ENCODE measurements at regions of chr3 and their contacts with region 1.

Region 1: DNA sequence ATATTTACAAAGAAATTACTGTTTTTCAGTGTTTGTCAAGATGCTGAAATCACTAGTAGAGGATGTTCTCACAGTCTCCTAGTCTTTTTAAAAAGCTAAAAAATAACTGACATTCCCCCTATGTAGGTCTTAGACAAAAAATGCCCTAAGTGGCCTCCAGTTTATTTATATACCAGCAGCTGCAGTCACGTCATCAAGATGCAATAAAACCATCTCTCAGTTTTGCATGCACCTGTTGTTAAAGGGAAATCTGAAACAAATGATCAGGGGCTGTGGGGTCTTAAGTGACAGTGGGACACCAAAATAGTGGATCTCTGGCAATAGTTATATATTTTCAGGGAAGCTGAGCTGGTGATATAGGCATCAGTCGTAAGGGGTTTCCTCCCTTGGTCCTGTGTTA is 146.5 kb upstream of the ARPP21 start:
- DNase-seq: no peak
- ATAC-seq: no peak
- H3K4me3 ChIP-seq: no peak overlapping the region
- H3K27ac ChIP-seq: no peak overlapping the region
- H3K4me1 ChIP-seq: no peaks in the 10 kb centered on the region
- H3K27me3 ChIP-seq: no peaks in the 10 kb centered on the region
- CTCF ChIP-seq: no peak
- EP300 ChIP-seq: no peak
- POLR2A ChIP-seq: no peak
- RAD21 ChIP-seq: no peak

Region 2: GRCh38 chr3:35393901-35394799 is 98.7 kb before region 1 on chr3:
- CTCF ChIA-PET with region 1: no interaction called
- POLR2A ChIA-PET with region 1: no interaction called
- in situ Hi-C with region 1: no loop called
- intact Hi-C with region 1: loop called (anchors 5 kb)
- DNase-seq: no peak
- ATAC-seq: no peak
- H3K4me3 ChIP-seq: no peak overlapping the region
- H3K27ac ChIP-seq: no peak overlapping the region
- H3K4me1 ChIP-seq: no peaks in the 10 kb centered on the region
- H3K27me3 ChIP-seq: no peaks in the 10 kb centered on the region
- CTCF ChIP-seq: no peak
- EP300 ChIP-seq: no peak
- POLR2A ChIP-seq: no peak
- RAD21 ChIP-seq: no peak

Region 3: GRCh38 chr3:35473956-35474355 is 18.9 kb before region 1 on chr3:
- CTCF ChIA-PET with region 1: no interaction called
- POLR2A ChIA-PET with region 1: no interaction called
- in situ Hi-C with region 1: no loop called
- intact Hi-C with region 1: no loop called
- DNase-seq: no peak
- ATAC-seq: no peak
- H3K4me3 ChIP-seq: no peak overlapping the region
- H3K27ac ChIP-seq: no peak overlapping the region
- H3K4me1 ChIP-seq: no peaks in the 10 kb centered on the region
- H3K27me3 ChIP-seq: no peaks in the 10 kb centered on the region
- CTCF ChIP-seq: no peak
- EP300 ChIP-seq: no peak
- POLR2A ChIP-seq: no peak
- RAD21 ChIP-seq: no peak

Region 4: DNA sequence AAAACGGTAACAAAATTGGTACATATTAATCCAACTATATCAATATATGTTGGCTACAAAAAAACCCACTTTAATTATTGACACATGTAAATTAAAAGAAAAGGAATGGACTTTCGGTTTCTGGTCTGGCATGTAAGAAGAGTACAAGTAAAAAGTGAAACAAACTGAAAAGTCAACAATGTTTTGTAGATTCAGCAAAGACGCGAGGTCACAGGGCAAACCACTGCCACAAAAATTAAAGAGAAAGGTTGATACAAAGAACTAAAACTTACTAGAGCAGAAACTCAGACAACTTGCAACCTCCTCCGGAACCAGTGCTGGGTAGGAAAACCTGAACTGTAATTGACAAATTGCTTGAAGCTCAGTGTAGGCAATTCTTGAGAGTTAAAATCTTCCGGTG is 35.9 kb after region 1 on chr3:
- CTCF ChIA-PET with region 1: no interaction called
- POLR2A ChIA-PET with region 1: no interaction called
- in situ Hi-C with region 1: no loop called
- intact Hi-C with region 1: no loop called
- DNase-seq: peak; percentile 35
- ATAC-seq: peak; percentile 62
- H3K4me3 ChIP-seq: peak overlapping the region in 1 of 3 experiments; percentile 9; a peak in 1 of 6 replicates
- H3K27ac ChIP-seq: no peak overlapping the region
- H3K4me1 ChIP-seq: peaks cover 23% of the 10 kb centered on the region
- H3K27me3 ChIP-seq: no peaks in the 10 kb centered on the region; a peak in 1 of 5 replicates
- CTCF ChIP-seq: no peak
- EP300 ChIP-seq: no peak
- POLR2A ChIP-seq: no peak
- RAD21 ChIP-seq: no peak

Region 5: DNA sequence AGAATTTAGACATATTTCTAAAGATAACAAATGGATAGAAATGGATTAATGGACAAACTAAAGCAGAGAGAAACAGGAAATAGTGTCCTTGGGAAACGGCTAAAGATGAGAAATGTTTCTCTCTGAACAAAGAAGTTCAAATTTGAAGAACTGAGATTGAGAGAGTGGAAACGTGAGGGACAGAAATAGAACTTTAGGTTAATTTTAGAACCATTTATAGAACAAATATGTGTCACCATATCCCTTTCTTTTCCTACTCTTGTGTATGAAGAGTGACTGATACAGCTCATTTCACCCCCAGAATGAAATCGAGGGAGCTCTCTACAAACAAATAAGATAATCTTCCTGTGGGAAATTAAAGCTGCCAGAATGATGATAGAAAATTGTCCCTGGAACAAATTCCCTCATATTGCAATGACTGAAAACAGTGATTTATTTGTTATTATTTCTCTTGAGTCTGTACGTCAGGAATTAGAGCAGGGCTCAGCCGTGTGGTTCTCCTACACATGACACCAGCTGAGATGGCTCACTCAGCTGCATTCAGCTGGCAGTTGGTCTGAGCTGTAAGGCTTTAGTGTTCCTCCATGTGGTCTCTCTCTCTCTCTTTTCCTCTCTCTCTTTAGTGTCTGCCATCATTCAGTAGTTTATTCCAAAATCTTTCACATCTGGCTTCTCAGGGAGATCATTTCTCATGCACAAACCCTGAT is 99.9 kb after region 1 on chr3:
- CTCF ChIA-PET with region 1: no interaction called
- POLR2A ChIA-PET with region 1: no interaction called
- in situ Hi-C with region 1: no loop called
- intact Hi-C with region 1: no loop called
- DNase-seq: no peak
- ATAC-seq: no peak
- H3K4me3 ChIP-seq: no peak overlapping the region
- H3K27ac ChIP-seq: no peak overlapping the region
- H3K4me1 ChIP-seq: no peaks in the 10 kb centered on the region
- H3K27me3 ChIP-seq: no peaks in the 10 kb centered on the region
- CTCF ChIP-seq: no peak
- EP300 ChIP-seq: no peak
- POLR2A ChIP-seq: no peak
- RAD21 ChIP-seq: no peak

Region 6: DNA sequence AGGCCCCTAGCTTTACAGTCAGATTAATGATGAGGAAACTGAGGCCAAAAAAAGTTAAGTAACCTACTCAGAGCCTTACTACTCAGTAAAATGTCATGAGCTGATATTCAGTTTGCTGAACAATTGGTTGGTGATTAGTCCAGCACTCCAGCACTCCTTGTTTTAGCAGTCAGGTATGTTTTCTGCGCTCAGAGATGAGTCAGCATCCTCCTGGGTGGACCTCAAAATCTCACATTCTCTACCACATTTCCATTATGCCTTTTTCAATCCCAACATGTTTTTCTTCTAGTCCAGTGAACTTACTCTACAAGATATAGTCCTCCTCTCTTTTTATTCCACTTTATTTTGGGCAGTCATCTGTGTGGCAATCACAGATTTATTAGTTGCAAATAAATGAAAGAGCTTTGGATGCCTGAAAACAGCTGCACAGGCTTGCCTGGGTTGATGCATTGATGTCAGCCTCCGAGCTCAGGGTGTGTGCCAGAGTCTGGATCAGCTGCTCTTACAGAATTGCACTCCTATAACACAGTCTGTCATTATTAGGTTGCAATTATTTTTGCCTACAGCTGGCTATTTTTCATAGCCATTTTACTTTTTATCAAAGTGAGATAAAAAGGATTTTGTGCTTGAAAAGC is 279.7 kb after region 1 on chr3:
- CTCF ChIA-PET with region 1: no interaction called
- POLR2A ChIA-PET with region 1: no interaction called
- in situ Hi-C with region 1: no loop called
- intact Hi-C with region 1: no loop called
- DNase-seq: no peak
- ATAC-seq: no peak
- H3K4me3 ChIP-seq: no peak overlapping the region
- H3K27ac ChIP-seq: no peak overlapping the region
- H3K4me1 ChIP-seq: no peaks in the 10 kb centered on the region
- H3K27me3 ChIP-seq: no peaks in the 10 kb centered on the region
- CTCF ChIP-seq: no peak
- EP300 ChIP-seq: no peak
- POLR2A ChIP-seq: no peak
- RAD21 ChIP-seq: no peak

Measured in HepG2 (cell line).